Astrocyte of the cerebellum (primary cell): ENCODE measurements at regions of chr1 and their contacts with region 1.

Region 1: GRCh38 chr1:1819762-1820161 is 41.5 kb upstream of the NADK start:
- DNase-seq: no peak
- H3K4me3 ChIP-seq: no peak overlapping the region
- CTCF ChIP-seq: no peak

Region 2: DNA sequence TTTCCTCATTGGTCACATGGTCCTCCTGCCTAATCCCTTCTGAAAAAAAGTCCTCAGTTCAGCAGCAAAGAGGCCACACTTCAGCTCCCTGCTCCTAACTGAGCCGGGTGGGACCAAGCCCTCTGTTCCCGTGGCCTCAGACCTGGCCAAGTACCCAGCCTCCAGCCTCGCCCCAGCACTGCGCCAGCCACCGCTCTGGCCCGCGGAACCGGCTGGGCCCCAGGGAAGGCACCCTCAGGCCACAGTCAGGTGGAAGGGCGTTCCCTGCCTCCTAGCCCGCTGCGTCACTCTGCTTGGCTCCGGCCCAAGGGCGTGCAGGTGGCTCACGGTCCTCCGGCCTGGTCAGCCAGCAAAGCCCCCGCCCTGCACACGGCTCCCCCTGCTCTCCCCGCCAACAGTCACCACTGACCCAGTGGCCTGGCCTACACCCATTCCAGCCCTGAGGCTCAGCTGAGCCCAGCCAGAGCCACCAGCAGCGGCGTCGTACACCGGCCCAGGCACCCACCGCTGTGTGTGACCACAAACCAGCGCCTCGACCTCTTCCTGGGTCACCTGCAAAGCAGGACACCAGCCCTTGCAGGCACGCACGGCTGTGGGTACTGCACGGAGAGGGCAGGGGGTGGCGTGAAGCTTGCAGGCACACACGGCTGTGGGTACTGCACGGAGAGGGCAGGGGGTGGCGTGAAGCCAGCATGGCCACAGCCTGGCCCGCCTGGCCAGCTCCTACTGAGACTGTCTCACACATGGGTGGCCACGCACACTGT is 60.9 kb before region 1 on chr1:
- in situ Hi-C with region 1: loop called (anchors 5 kb)
- DNase-seq: no peak
- H3K4me3 ChIP-seq: no peak overlapping the region
- CTCF ChIP-seq: no peak

Region 3: DNA sequence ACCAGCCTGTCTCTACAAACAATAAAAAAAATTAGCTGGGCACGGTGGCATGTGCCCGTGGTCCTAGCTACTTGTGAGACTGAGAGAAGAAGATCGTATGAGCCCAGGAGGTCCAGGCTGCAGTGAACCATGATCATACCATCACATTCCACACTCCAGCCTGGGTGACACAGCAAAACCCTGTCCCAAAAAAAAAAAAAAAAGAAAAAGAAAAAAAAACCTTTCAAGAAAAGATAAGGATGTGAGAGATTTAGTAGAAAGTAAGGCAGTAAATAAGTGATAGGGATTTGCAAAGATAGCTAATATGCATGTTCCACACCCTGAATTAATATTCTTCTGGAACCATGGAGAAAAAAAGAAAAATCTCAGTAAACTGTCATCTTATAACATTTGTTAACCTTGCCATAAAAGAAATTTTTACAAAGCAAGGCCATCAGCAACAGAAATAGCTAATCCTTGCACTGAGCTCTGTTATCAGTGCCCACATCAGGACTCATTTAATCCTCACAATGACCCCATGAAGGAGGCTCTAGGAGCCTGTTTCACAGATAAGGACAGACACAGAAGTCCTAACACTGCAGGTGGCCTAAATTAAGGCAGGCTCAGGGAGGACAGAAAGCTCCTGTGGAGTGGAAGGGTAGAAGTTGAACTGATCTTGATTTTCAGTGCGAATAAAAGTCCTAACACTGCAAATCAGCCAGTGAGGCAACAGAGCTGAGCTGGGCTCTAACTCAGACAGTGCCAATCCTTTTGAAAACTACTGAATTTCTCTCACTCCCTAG is 63.5 kb after region 1 on chr1:
- in situ Hi-C with region 1: loop called (anchors 5 kb)
- DNase-seq: no peak
- H3K4me3 ChIP-seq: no peak overlapping the region
- CTCF ChIP-seq: no peak